A673 (cell line): ENCODE measurements at regions of chr11 and their contacts with region 1.

Region 1: DNA sequence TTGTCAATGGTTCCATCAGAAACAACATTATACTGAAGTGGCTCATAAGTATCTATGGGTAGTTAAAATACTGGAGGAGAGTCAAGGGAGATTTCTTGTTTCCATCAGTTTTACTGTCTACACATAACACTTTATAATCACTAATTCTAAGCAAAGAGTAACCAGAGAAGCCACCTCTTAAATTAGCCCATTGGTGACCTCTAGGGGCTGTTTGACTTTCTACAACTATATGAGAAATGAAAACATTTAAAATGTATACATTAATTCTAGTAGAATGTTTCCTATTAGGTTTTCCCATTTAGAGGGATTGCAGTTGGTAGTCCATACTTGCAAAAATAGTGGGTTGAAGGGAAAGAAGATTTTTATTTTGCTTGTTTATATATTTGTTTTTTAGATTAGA is 504.3 kb downstream of the FAM181B start:
- DNase-seq: peak; percentile 58
- H3K4me3 ChIP-seq: no peak overlapping the region
- H3K27ac ChIP-seq: no peak overlapping the region
- H3K4me1 ChIP-seq: no peaks in the 10 kb centered on the region
- H3K27me3 ChIP-seq: no peaks in the 10 kb centered on the region
- CTCF ChIP-seq: peak; percentile 71

Region 2: GRCh38 chr11:81658722-81659121 is 570.6 kb before region 1 on chr11:
- CTCF ChIA-PET with region 1: no interaction called
- POLR2A ChIA-PET with region 1: no interaction called
- intact Hi-C with region 1: loop called (anchors 5 kb)
- DNase-seq: peak; percentile 65
- H3K4me3 ChIP-seq: no peak overlapping the region
- H3K27ac ChIP-seq: no peak overlapping the region
- H3K4me1 ChIP-seq: no peaks in the 10 kb centered on the region
- H3K27me3 ChIP-seq: no peaks in the 10 kb centered on the region
- CTCF ChIP-seq: peak; percentile 71

Region 3: GRCh38 chr11:81987829-81988472 is 241.4 kb before region 1 on chr11:
- CTCF ChIA-PET with region 1: no interaction called
- POLR2A ChIA-PET with region 1: no interaction called
- intact Hi-C with region 1: no loop called
- DNase-seq: no peak
- H3K4me3 ChIP-seq: no peak overlapping the region
- H3K27ac ChIP-seq: no peak overlapping the region
- H3K4me1 ChIP-seq: no peaks in the 10 kb centered on the region
- H3K27me3 ChIP-seq: no peaks in the 10 kb centered on the region
- CTCF ChIP-seq: no peak

Region 4: DNA sequence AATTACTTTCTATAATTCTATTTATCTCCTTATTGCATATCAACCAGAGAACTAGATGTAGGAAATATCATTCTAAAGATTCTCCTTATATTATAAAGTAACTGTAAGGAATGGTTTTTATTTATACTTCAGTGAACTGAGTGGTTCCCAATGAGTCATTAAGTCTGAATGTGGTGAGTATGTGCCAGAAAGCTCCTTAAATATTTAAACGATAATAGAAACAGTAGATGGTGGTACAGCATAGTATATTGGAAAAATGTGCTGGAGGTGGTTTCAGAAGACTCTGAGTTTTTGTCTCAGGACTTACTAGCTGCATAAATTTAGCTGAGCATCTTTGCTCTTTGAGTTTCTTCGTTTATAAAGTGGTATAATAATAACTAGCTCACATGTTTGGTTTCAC is 149.2 kb before region 1 on chr11:
- CTCF ChIA-PET with region 1: interaction called, 4 read pairs
- POLR2A ChIA-PET with region 1: no interaction called
- intact Hi-C with region 1: loop called (anchors 5 kb)
- DNase-seq: peak; percentile 35
- H3K4me3 ChIP-seq: no peak overlapping the region
- H3K27ac ChIP-seq: no peak overlapping the region
- H3K4me1 ChIP-seq: no peaks in the 10 kb centered on the region
- H3K27me3 ChIP-seq: no peaks in the 10 kb centered on the region
- CTCF ChIP-seq: no peak

Region 5: DNA sequence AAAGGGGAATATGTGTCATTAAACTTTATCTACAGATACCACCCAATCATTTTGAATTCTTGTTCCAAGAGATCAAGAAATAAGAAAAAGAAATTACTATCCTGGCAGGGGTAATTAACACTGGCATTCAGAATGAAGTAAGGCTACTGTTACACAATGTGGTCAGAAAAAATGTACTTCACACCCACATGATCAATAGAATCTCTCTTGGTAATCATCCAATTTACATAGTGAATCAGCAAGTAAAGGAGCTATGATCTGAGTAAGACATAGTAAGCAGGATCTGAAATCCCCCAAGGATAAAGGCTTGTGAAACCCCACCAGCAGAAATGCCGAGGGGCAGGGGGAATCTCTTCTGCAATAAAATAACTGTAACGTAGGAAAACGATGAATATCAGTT is 37.8 kb after region 1 on chr11:
- CTCF ChIA-PET with region 1: no interaction called
- POLR2A ChIA-PET with region 1: no interaction called
- intact Hi-C with region 1: no loop called
- DNase-seq: no peak
- H3K4me3 ChIP-seq: no peak overlapping the region
- H3K27ac ChIP-seq: no peak overlapping the region
- H3K4me1 ChIP-seq: no peaks in the 10 kb centered on the region
- H3K27me3 ChIP-seq: no peaks in the 10 kb centered on the region
- CTCF ChIP-seq: no peak